IMR-90 (cell line): ENCODE measurements at regions of chr11 and their contacts with region 1.

Region 1: DNA sequence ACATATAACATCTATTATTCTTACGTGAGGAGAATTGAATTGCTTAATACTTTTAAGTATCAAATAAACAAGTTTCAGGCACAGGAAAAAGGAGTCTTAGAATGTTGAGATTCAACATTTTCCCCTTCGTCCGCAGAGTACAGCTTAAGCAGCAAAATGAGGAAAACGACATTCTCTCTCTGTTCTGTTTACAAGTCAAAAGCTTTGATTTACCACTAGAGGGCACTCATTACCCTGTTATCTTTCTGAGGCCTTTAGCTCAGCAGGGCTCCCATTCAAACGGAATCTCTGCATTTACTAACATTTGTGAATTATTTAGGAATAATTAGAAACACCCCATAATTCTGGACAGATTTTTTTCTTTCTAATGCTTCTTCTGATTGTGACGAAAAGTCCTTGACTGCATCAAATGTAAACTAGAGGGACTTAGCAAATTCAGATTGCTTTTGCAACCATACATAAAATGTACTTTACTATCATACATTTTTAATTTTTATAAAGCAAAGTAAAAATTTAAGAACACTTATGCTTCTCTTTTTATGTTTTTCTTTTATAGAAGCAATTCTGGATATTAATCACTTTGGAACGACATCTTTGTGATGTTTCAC is 75.0 kb downstream of the JRKL start:
- DNase-seq: peak; percentile 78
- ATAC-seq: peak; percentile 92
- H3K4me3 ChIP-seq: no peak overlapping the region
- H3K27ac ChIP-seq: no peak overlapping the region
- H3K4me1 ChIP-seq: no peaks in the 10 kb centered on the region
- H3K27me3 ChIP-seq: no peaks in the 10 kb centered on the region; the same call in 1 of the 2 replicates
- CTCF ChIP-seq: peak; percentile 75
- POLR2A ChIP-seq: no peak
- RAD21 ChIP-seq: peak; percentile 79

Region 2: DNA sequence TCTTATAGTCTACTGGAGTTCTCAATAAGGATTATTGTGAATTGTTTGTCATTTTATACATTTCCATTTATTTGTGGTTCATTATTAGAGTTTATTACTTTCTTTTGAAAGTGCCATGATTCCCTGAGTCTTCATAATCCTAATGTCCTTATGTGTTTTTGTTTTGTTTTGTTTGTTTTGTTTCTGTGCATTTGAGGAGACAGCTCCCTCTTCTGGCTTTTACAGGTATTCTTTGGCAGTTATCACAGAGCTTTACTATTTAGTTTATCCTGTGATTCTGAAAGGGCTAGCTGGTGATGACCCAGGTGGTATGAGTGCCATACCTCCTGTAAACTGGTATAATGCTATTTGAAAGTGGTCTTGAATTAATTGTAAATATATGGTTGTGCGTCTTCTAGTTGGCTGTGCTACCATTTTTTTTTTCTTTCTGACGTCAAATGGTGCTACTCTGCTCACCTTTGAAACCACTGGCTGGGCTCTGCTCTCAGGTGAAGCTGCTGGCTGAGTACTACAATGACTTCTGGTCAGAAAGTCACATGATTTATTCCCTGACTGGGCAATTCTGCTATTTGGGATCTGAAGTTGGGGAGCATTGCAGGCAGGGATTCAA is 676.2 kb after region 1 on chr11:
- CTCF ChIA-PET with region 1: no interaction called
- POLR2A ChIA-PET with region 1: no interaction called
- dilution Hi-C with region 1: no loop called
- in situ Hi-C with region 1: no loop called
- intact Hi-C with region 1: loop called (anchors 5 kb)
- DNase-seq: no peak
- ATAC-seq: no peak
- H3K4me3 ChIP-seq: no peak overlapping the region
- H3K27ac ChIP-seq: no peak overlapping the region
- H3K4me1 ChIP-seq: no peaks in the 10 kb centered on the region
- H3K27me3 ChIP-seq: no peaks in the 10 kb centered on the region
- CTCF ChIP-seq: peak; percentile 24; the same call in 1 of the 2 replicates
- POLR2A ChIP-seq: no peak
- RAD21 ChIP-seq: no peak; the same call in 1 of the 2 replicates